A549 (cell line): ENCODE measurements at regions of chr5 and their contacts with region 1.

Region 1: DNA sequence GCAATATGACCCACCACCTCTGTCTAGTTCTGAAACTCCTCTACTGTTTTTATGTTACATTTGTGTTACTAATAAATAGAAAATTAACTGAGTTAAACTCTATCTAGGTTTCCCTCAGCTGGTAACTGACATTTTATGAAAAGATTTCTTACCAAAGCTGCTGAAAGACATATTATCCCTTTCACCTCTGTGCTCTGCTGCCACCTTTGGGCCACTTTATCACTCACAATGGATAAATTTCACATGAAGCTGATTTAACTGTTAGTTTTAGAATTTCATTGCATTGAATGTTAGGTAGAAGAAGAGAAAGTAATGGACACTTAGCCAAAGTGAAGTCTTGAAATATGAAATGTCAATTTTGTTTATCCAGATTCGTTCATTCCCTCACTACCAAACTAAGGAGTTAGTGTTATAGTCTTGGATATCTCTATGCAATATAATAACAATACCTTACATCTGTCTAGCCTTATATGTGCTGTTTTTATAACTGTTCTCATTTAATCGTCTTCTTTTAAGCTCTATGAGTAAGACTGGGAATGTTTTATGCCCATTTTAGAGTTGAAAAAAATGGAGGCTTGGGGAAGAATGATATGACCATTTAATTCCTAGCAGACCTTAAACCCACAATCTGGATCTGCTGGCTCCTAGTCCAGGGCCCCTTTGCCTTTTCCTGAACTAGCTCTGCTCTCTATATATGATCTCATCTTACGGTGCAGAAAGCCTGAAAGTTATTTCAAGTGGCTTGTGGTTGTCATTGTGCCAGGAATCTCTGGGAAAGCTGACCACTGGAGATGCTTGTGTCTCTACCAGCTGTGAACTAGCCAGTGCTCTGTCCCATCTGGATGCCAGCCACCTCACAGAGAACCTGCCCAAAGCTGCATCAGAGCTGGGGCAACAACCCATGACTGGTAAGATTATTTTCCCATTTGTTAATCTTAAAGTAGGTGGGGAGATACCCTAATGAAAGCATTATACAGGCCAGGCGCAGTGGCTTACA is 97.1 kb downstream of the GOLPH3 start:
- DNase-seq: peak; percentile 31 to 62
- ATAC-seq: peak in 1 of 2 experiments; percentile 76; a peak in 4 of 6 replicates
- H3K4me3 ChIP-seq: no peak overlapping the region
- H3K27ac ChIP-seq: peak overlapping the region in 1 of 2 experiments; percentile 21; a peak in 1 of 6 replicates
- H3K4me1 ChIP-seq: no peaks in the 10 kb centered on the region; the same call in 2 of the 3 replicates
- CTCF ChIP-seq: peak; percentile 95
- EP300 ChIP-seq: no peak
- POLR2A ChIP-seq: no peak
- RAD21 ChIP-seq: peak; percentile 96 to 98

Region 2: DNA sequence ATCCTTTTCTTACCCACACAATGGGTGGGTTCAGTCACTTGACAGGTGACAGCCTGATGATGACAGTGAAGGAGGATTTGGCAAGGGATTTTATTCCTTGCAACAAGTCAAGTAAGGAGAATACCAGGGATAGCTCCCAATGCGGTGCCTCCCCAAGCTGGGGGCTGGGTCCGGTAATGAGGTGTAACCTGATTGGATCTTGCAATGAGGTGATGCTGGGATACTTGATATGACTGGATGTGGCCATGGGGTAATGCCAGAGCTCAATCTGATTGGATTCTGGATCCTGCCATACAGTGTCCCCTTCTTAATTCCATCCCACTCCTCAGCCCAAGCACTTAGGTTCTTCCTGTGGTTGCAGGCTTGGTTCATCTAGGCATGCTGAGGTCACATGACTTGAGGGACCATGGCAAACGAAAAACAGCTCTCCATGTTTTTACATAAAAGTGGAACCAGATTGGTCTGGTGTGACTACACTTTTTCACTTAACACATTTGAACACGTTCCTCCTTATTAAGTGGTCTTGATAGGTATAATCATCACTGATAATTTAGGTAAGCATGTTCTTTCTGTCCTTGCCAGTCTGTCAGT is 257.0 kb before region 1 on chr5:
- CTCF ChIA-PET with region 1: interaction called, 241 read pairs
- POLR2A ChIA-PET with region 1: no interaction called
- DNase-seq: peak in 1 of 2 experiments; percentile 23
- ATAC-seq: peak in 1 of 2 experiments; percentile 56; a peak in 3 of 6 replicates
- H3K4me3 ChIP-seq: no peak overlapping the region
- H3K27ac ChIP-seq: no peak overlapping the region
- H3K4me1 ChIP-seq: no peaks in the 10 kb centered on the region
- CTCF ChIP-seq: no peak
- EP300 ChIP-seq: no peak
- POLR2A ChIP-seq: no peak
- RAD21 ChIP-seq: no peak

Region 3: DNA sequence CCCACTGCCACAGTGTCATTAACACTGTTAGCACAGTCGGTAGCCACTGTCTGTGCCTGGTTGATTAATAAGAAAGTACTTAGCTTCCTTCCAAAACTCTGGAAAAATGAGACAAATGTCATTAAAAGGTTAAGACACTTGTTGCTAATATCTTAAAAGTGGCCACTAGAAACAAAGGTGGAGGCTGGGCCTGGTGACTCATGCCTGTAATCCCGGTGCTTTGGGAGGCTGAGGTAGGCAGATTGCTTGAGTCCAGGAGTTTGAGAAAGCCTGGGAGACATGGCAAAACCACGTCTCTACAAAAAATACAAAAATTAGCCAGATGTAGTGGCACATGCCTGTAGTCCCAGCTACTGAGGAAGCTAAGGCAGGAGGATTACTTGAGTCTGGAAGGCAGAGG is 244.0 kb before region 1 on chr5:
- CTCF ChIA-PET with region 1: interaction called, 241 read pairs
- POLR2A ChIA-PET with region 1: no interaction called
- DNase-seq: no peak
- ATAC-seq: no peak
- H3K4me3 ChIP-seq: no peak overlapping the region
- H3K27ac ChIP-seq: no peak overlapping the region
- H3K4me1 ChIP-seq: no peaks in the 10 kb centered on the region
- CTCF ChIP-seq: no peak
- EP300 ChIP-seq: no peak
- POLR2A ChIP-seq: no peak
- RAD21 ChIP-seq: no peak

Region 4: DNA sequence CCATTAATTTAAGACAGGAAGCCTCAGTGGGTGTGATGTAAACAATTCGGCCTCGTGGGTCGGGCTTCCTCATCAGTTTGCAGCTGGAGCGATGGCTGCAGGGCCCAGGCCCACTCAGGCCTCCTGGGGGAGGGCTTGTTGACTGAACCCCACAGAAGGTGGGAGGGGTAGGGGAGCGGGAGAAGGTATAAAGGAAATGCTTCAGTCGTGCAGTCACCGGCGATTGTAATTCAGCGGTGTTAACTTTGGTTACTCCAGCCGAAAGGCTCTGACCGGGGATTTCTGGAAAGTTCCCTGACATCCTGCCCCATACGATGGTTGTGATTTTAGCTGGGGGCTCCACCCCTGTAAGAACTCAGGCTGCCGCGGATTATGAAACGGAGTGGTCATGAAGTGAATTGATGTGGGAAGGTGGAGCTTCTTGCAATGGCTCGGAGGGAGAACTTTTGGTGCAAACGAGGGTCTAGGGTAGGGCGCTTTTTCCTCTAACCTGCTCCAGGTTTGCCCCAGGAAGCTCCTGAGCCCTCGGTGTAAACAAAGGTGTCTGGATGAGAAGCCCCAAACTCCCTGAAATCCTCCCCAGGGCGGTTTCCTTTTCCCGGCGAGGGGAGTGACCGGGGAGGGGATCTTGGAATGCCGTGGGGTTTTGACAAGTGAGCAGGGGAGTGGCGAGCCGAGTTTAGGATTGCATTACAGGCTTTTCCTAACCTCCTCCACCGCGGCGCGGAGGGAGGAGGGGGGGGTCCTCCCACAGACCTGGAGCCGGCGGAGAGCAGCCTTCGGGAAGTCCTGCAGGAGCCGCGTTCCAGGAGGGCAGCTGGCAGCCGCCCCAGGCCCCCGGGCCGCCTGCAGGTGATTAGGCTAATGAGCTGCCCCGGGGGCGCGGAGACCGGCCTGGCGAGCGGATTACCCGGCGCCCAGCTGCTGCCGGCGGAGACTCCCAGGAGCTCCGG is 222.5 kb before region 1 on chr5:
- CTCF ChIA-PET with region 1: interaction called, 34 read pairs
- POLR2A ChIA-PET with region 1: no interaction called
- DNase-seq: peak in 1 of 2 experiments; percentile 37
- ATAC-seq: peak; percentile 77 to 79
- H3K4me3 ChIP-seq: peak overlapping the region; percentile 62
- H3K27ac ChIP-seq: peak overlapping the region; percentile 67 to 75; a peak in 5 of 6 replicates
- H3K4me1 ChIP-seq: 0 out of 3 replicates have a peak, but pooled peaks cover 5% of the 10 kb centered on the region
- CTCF ChIP-seq: no peak
- EP300 ChIP-seq: no peak
- POLR2A ChIP-seq: no peak
- RAD21 ChIP-seq: no peak

Region 5: DNA sequence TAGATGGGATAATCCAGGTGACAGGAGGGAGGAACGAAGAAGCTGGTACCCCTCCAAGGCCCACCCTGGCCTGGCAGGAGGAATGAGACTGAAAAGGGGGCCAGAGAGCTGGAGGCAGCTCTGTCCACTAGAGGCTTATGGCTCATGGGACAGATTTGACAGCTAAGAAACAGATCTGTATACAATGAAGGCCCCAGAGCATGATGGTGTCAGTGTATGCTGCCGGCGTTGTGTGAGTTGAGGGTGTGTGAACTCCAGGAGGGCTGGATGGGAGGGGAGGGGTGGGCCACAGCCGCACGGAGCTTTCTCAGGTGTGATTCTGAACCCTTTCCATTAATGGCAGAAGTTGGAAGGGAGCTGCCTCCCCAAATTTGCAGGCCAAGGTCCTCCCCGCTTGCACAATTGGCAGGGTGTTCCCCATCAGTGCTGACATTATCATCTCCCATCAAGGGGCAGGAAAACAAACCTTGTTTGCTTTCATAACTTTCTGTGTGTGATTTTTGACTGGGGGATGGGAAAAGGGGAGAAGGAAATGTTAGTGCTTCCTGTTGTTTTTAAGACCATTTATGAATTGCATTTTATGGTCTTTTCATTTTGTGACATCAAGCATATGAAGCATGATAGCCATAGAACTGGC is 145.3 kb before region 1 on chr5:
- CTCF ChIA-PET with region 1: interaction called, 82 read pairs
- POLR2A ChIA-PET with region 1: interaction called, 5 read pairs
- DNase-seq: no peak
- ATAC-seq: 0 out of 6 replicates have a peak, but pooled peaks of 1 of the 2 experiments have one; percentile 28
- H3K4me3 ChIP-seq: no peak overlapping the region
- H3K27ac ChIP-seq: no peak overlapping the region; a peak in 1 of 6 replicates
- H3K4me1 ChIP-seq: 0 out of 3 replicates have a peak, but pooled peaks cover 5% of the 10 kb centered on the region
- CTCF ChIP-seq: no peak
- EP300 ChIP-seq: no peak
- POLR2A ChIP-seq: no peak
- RAD21 ChIP-seq: no peak

Region 6: DNA sequence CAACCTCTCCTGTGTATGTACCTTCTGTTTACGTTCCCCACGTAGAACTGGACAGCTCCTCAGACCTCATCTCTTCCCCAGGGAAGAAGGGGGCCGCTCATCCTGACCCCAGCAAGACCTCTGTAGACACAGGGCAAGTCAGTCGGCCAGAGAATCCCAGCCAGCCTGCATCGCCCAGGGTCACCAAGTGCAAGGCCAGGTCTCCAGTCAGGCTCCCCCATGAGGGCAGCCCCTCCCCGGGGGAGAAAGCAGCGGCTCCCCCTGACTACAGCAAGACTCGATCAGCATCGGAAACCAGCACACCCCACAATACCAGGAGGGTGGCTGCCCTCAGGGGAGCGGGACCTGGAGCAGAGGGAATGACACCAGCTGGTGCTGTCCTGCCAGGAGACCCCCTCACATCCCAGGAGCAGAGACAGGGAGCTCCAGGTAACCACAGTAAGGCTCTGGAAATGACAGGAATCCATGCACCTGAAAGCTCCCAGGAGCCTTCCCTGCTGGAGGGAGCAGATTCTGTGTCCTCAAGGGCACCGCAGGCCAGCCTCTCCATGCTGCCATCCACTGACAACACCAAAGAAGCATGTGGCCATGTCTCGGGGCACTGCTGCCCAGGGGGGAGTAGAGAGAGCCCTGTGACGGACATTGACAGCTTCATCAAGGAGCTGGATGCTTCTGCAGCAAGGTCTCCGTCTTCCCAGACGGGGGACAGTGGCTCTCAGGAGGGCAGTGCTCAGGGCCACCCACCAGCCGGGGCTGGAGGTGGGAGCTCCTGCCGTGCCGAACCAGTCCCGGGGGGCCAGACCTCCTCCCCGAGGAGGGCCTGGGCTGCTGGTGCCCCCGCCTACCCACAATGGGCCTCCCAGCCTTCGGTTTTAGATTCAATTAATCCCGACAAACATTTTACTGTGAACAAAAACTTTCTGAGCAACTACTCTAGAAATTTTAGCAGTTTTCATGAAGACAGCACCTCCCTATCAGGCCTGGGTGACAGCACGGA is 10.4 kb after region 1 on chr5:
- CTCF ChIA-PET with region 1: interaction called, 26 read pairs
- POLR2A ChIA-PET with region 1: no interaction called
- DNase-seq: no peak
- ATAC-seq: 0 out of 6 replicates have a peak, but pooled peaks of 1 of the 2 experiments have one; percentile 17
- H3K4me3 ChIP-seq: no peak overlapping the region
- H3K27ac ChIP-seq: no peak overlapping the region
- H3K4me1 ChIP-seq: no peaks in the 10 kb centered on the region
- CTCF ChIP-seq: no peak
- EP300 ChIP-seq: no peak
- POLR2A ChIP-seq: no peak
- RAD21 ChIP-seq: no peak